ENCODE measurements at regions of chr11 and their contacts with region 1.

Region 1: GRCh38 chr11:9137293-9138132 is 46.1 kb upstream of the SCUBE2 start:
- DNase-seq: peak; percentile 61
- ATAC-seq: peak; percentile 84
- H3K4me3 ChIP-seq: no peak overlapping the region
- H3K27ac ChIP-seq: peak overlapping the region; percentile 37
- H3K4me1 ChIP-seq: peaks cover 39% of the 10 kb centered on the region
- H3K27me3 ChIP-seq: no peaks in the 10 kb centered on the region
- CTCF ChIP-seq: peak; percentile 100

Region 2: DNA sequence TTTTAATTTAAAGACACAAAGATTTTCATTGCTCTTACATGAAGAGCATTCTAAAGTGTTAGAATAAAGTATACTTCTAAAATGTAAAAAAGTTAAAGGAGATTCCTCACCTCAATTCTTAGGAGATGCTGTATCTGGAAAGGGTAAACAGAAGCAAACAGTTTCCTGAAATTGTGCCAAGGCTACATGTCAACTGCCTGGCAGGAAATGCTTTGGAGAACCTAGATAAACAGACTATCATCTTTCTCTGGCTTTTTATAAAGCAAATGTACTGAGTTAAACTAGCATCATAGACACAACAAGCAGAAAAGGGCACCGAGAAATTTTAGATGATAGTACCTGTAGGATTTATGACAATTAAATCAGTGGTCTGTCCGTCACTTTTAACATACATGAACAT is 251.2 kb before region 1 on chr11:
- CTCF ChIA-PET with region 1: no interaction called
- POLR2A ChIA-PET with region 1: no interaction called
- in situ Hi-C with region 1: no loop called
- intact Hi-C with region 1: no loop called
- DNase-seq: no peak
- ATAC-seq: no peak
- H3K4me3 ChIP-seq: no peak overlapping the region
- H3K27ac ChIP-seq: no peak overlapping the region
- H3K4me1 ChIP-seq: 0 out of 2 replicates have a peak, but pooled peaks cover 2% of the 10 kb centered on the region
- H3K27me3 ChIP-seq: no peaks in the 10 kb centered on the region
- CTCF ChIP-seq: no peak

Region 3: GRCh38 chr11:8911029-8911826 is 226.3 kb before region 1 on chr11 and contains the start of gene AKIP1:
- CTCF ChIA-PET with region 1: interaction called, 21 read pairs
- POLR2A ChIA-PET with region 1: no interaction called
- in situ Hi-C with region 1: no loop called
- intact Hi-C with region 1: loop called (anchors 5 kb)
- DNase-seq: no peak
- ATAC-seq: peak; percentile 94
- H3K4me3 ChIP-seq: peak within 1 kb of the TSS; percentile 72 to 81
- H3K27ac ChIP-seq: peak within 1 kb of the TSS; percentile 88
- H3K4me1 ChIP-seq: peaks cover 28% of the 10 kb centered on the region
- H3K27me3 ChIP-seq: no peaks in the 10 kb centered on the region
- CTCF ChIP-seq: no peak
- total RNA-seq, gene AKIP1: 85.2 TPM

Region 4: GRCh38 chr11:8980485-8980884 is 157.0 kb before region 1 on chr11:
- CTCF ChIA-PET with region 1: interaction called, 10 read pairs
- POLR2A ChIA-PET with region 1: no interaction called
- in situ Hi-C with region 1: no loop called
- intact Hi-C with region 1: no loop called
- DNase-seq: no peak
- ATAC-seq: peak; percentile 19; the same call in 1 of the 2 replicates
- H3K4me3 ChIP-seq: no peak overlapping the region
- H3K27ac ChIP-seq: no peak overlapping the region
- H3K4me1 ChIP-seq: no peaks in the 10 kb centered on the region
- H3K27me3 ChIP-seq: no peaks in the 10 kb centered on the region
- CTCF ChIP-seq: no peak

Region 5: DNA sequence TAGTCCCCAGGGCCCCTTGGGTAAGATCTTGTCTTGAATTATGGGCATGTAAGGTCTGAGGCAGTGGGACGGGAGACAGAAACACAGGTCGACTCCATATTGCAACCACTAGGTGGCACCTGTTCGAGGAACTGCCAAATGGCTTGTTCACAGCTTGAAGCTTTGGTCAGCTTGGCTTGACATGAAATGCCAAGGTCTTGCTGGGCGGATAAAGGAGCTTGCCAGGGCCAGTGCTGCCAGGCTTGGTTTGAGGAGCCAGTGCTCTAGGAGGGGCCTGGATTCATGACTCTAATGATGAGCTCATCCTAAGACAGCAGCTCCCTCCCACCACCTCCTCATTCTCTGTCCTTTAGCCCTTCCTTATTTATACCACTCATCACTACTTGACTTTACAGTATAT is 121.8 kb before region 1 on chr11:
- CTCF ChIA-PET with region 1: interaction called, 48 read pairs
- POLR2A ChIA-PET with region 1: interaction called, 3 read pairs
- in situ Hi-C with region 1: no loop called
- intact Hi-C with region 1: loop called (anchors 1 kb)
- DNase-seq: peak; percentile 81
- ATAC-seq: peak; percentile 92
- H3K4me3 ChIP-seq: no peak overlapping the region
- H3K27ac ChIP-seq: no peak overlapping the region
- H3K4me1 ChIP-seq: no peaks in the 10 kb centered on the region
- H3K27me3 ChIP-seq: no peaks in the 10 kb centered on the region
- CTCF ChIP-seq: peak; percentile 96

Region 6: DNA sequence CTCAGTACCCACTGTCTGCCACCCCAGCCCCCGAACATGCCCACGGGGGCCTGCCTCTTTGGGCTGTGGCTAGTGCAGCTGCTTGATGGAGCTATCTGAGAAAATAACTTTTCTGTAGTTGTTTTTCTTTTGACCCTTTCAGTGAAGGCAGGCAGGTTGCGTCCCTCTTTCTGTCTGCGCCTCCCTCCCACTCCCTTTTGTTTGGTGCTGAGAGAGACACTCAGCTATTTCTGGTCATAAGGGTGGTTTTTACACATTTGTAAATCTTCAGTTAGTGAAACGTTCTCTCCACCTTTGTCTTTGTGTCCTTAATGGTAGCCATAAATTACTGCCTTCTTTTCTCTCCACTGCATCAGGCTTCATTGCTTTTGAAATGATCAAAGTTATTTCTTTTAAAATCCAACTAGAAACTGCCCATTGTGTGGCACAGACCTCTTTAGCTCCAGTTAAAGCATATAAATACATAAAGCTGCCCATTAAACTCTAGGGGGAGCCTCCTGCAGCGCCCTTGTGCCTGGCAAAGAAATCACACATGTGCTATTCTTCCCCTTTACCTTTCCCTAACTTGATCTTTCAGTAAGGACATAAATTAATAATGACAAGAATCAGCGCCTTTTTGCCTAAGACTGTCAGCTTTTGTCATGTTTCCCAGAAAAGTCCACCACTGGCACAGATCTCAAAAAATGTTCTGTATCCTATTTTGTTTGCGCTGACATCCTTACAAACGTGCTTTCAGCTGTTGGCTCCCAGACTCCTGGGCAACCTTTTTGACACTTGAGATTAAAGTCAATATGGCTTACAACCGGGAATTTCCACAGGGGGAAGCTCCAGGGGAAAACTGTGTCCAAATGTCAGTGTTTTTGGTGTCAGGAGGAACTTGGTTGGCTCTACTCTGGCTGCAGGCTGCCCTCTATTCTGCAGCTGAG is 44.4 kb before region 1 on chr11:
- CTCF ChIA-PET with region 1: interaction called, 18 read pairs
- POLR2A ChIA-PET with region 1: interaction called, 3 read pairs
- in situ Hi-C with region 1: no loop called
- intact Hi-C with region 1: no loop called
- DNase-seq: no peak
- ATAC-seq: peak; percentile 53; the same call in 1 of the 2 replicates
- H3K4me3 ChIP-seq: no peak overlapping the region
- H3K27ac ChIP-seq: no peak overlapping the region
- H3K4me1 ChIP-seq: peaks cover 11% of the 10 kb centered on the region; the same call in 1 of the 2 replicates
- H3K27me3 ChIP-seq: peaks cover 7% of the 10 kb centered on the region; the same call in 1 of the 2 replicates
- CTCF ChIP-seq: peak; percentile 52

Region 7: GRCh38 chr11:9118277-9118676 is 19.2 kb before region 1 on chr11:
- CTCF ChIA-PET with region 1: interaction called, 3 read pairs
- POLR2A ChIA-PET with region 1: interaction called, 17 read pairs
- in situ Hi-C with region 1: no loop called
- intact Hi-C with region 1: no loop called
- DNase-seq: no peak
- ATAC-seq: no peak
- H3K4me3 ChIP-seq: no peak overlapping the region
- H3K27ac ChIP-seq: no peak overlapping the region
- H3K4me1 ChIP-seq: no peaks in the 10 kb centered on the region
- H3K27me3 ChIP-seq: no peaks in the 10 kb centered on the region
- CTCF ChIP-seq: no peak